ENCODE measurements at regions of chr1 and their contacts with region 1.

Region 1: DNA sequence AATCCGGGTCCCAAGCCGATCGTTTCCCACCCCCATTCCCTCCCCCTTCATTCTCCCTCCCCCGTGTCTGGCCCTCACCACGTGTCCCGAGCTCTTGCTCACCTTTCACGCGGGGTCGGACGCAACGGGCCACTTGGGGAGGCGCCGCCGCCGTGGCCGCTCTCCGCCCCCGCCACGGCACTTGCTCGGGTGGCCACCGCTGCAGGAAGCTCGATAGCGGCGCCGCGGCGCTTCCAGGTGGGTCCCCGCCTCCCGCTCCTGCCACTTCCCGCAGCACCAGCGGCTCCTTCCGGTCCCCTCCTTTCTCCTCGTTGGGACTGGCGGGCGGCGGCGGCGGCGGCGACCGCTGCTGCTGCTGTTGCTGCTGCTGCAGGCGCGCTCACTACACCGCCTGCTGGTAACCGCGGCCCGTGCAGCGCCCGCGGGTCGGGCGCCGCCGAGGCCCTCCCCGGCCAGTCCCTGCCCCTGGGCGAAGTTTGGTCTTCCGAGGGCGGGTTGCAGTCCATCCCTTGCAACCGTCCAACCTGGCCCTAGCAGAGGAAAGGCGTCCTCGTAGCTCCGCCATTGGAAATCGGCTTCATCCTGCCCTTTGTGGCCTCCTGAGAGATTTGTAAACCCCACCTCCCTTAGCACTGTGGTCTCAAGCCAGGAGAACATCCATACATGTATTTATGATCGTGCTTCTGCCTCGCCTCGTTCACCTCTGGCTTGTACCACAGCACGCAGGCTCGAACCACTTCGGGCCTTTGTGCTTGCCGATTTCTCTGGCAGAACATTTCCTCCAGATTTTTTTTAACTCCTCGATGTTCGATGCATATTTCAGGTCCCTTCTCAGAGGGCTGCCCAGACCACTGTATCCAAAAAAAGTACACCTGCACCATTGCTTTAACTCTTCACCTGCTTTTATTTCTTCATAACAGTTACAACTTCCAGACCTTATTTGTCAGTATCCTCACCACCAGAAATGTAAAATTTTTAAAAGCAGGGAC is 996 bp upstream of the ZZZ3 start:
- DNase-seq: peak; percentile 72
- H3K4me3 ChIP-seq: peak overlapping the region; percentile 95
- H3K27ac ChIP-seq: peak overlapping the region; percentile 87
- H3K27me3 ChIP-seq: no peaks in the 10 kb centered on the region
- CTCF ChIP-seq: peak; percentile 73

Region 2: GRCh38 chr1:77538956-77539518 is 144.4 kb before region 1 on chr1:
- CTCF ChIA-PET with region 1: interaction called, 7 read pairs
- POLR2A ChIA-PET with region 1: interaction called, 23 read pairs
- DNase-seq: peak; percentile 83
- H3K4me3 ChIP-seq: no peak overlapping the region
- H3K27ac ChIP-seq: peak overlapping the region; percentile 99
- H3K27me3 ChIP-seq: no peaks in the 10 kb centered on the region
- CTCF ChIP-seq: no peak

Measured in AG04450 (cell line).